ENCODE measurements at regions of chr5 and their contacts with region 1.

Region 1: GRCh38 chr5:142874537-142874936 is 104.4 kb downstream of the ARHGAP26 start:
- DNase-seq: peak; percentile 95
- H3K4me3 ChIP-seq: no peak overlapping the region
- H3K27ac ChIP-seq: peak overlapping the region; percentile 79 to 82 (median 80)
- H3K4me1 ChIP-seq: peaks cover 30 to 62% (median 58%) of the 10 kb centered on the region in 4 donors
- H3K27me3 ChIP-seq: no peaks in the 10 kb centered on the region
- CTCF ChIP-seq: no peak
- EP300 ChIP-seq: no peak
- POLR2A ChIP-seq: no peak

Region 2: GRCh38 chr5:142713121-142713706 is 161.3 kb before region 1 on chr5:
- in situ Hi-C with region 1: no loop called
- intact Hi-C with region 1: loop called (anchors 5 kb)
- DNase-seq: peak; percentile 92
- H3K4me3 ChIP-seq: peak overlapping the region in 3 of 4 donors; percentile 35 to 63 (median 41)
- H3K27ac ChIP-seq: peak overlapping the region; percentile 67 to 82 (median 72)
- H3K4me1 ChIP-seq: peaks cover 0 to 12% (median under 1%) of the 10 kb centered on the region in 4 donors
- H3K27me3 ChIP-seq: peaks cover 6% of the 10 kb centered on the region
- CTCF ChIP-seq: peak; percentile 93 to 98 (median 96)
- EP300 ChIP-seq: no peak
- POLR2A ChIP-seq: no peak

Region 3: GRCh38 chr5:142753116-142753631 is 121.4 kb before region 1 on chr5:
- in situ Hi-C with region 1: loop called in 2 of 4 experiments (anchors 10 kb)
- intact Hi-C with region 1: no loop called
- DNase-seq: peak; percentile 23
- H3K4me3 ChIP-seq: no peak overlapping the region
- H3K27ac ChIP-seq: peak overlapping the region; percentile 28 to 54 (median 42)
- H3K4me1 ChIP-seq: peaks cover 6 to 16% (median 7%) of the 10 kb centered on the region in 4 donors
- H3K27me3 ChIP-seq: no peaks in the 10 kb centered on the region
- CTCF ChIP-seq: no peak
- EP300 ChIP-seq: no peak
- POLR2A ChIP-seq: no peak